Activated T-helper 1 cell treated with anti-CD3 and anti-CD28 coated beads, Interleukin-12 subunit alpha, Interleukin-12 subunit beta, Interleukin-2, Interleukin-4 antibody, amounts not matched to agents 30 ng/mL and 10 ng/mL and 1 ng/mL, durations not matched to agents 14 hours and 24 hours and 36 hours (primary cell): ENCODE measurements at regions of chr6 and their contacts with region 1.

Region 1: DNA sequence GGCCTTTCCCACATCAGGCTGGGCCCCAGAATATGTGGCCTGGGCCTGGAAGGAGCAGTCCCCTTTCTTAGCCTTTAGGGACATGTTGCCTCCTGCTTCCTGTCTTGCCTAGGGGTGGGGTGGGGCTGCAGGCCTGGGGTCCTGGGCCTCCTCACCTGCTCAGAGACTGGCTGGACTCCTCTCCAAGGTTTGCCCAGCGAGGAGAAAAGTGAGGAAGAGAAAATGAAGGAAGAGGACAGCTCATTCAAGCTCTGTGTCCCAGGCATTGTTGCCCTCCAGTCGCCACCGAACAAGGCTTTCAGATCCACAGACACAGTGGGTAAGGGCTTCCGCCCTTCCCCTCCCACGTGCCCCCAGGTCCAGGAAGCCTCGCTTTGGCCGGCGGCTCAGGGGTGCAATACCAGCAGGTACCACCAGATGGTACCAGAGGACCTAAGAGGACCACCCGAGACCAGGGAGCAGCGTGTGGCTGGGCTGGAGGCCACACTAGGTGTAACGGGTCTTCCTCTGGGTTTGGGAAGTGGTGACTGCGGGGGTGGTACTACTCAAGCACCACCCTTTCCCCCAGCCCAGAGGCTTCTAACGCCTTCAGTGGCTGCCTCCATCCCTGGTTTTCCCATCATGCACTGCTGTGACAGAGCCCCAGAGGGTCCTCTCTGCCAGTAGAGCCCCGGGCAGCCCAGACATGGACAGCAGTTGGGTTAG is 5.5 kb upstream of the BAK1 start:
- DNase-seq: peak; percentile 85
- H3K4me3 Mint-ChIP-seq: peak overlapping the region; percentile 79
- H3K27ac Mint-ChIP-seq: peak overlapping the region; percentile 94
- H3K4me1 Mint-ChIP-seq: peaks cover 22% of the 10 kb centered on the region
- H3K27me3 Mint-ChIP-seq: no peaks in the 10 kb centered on the region

Region 2: DNA sequence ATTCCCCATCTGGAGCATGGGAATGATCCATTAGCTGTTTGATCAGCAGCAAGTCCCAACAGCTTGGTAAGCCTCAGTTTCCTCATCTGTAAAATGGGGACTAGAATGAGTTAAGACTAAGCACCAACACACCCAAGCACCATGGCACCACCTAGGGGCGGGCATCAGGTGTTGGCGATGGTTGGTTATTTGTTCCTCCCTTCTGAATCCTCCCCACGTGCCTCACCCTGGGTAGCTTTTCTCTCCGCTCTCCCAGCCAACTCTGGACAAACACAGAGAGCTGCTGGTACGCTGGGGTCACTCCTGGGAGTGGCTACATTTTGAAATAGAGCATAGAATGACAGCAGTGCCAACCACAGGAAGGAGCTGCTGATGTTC is 22.2 kb after region 1 on chr6:
- intact Hi-C with region 1: loop called (anchors 1 kb)
- DNase-seq: no peak
- H3K4me3 Mint-ChIP-seq: no peak overlapping the region
- H3K27ac Mint-ChIP-seq: no peak overlapping the region
- H3K4me1 Mint-ChIP-seq: no peaks in the 10 kb centered on the region
- H3K27me3 Mint-ChIP-seq: peaks cover 4% of the 10 kb centered on the region

Region 3: GRCh38 chr6:33633462-33634158 is 48.1 kb after region 1 on chr6:
- intact Hi-C with region 1: loop called (anchors 1 kb)
- DNase-seq: peak; percentile 61
- H3K4me3 Mint-ChIP-seq: peak overlapping the region; percentile 82
- H3K27ac Mint-ChIP-seq: peak overlapping the region; percentile 90
- H3K4me1 Mint-ChIP-seq: peaks cover 65% of the 10 kb centered on the region
- H3K27me3 Mint-ChIP-seq: no peaks in the 10 kb centered on the region

Region 4: DNA sequence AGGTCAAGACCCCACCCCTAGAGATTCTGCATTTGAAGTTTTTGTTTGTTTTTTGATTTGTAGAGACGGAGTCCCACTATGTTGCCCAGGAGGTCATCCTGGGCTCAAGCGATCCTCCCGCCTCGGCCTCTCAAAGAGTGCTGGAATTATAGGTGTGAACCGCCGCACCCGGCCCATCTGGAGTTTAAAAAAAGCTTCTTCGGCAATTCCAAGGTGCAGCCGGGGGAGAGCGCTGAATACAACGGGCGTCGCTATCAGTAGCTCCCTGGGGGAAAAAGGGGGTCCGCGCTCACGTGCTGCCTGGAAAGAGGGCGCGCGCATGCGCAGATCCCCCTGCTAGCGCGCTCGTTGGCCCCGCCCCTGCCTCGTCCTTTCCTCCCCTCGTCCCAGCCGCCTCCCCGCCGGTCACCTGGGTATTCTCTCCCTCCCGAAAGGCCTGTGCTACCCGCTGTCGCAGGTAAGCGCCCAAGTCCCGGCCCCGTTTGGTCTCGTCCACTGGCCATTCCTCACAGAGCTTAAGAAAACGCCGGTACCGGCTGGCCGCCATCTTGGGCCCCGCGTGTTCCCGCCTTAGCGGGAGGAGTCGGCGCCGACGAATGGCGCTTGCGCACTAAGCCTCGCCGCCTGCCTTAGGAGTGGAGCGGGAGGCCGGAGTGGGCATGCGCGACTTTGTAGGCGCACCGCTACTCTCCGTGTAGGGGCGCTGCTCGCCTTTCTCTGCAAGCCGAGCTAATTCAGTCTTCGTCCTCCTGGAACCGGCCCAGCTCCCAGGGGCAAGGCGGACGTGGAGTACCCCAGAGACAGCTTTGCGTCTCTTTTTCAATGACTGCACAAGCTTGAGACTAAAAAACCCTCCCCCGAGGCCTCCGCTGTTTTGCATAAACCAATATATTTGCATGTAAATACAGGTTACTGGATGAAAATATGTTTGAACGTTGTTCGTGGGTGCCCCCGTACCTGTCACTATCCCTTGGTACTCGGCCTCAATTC is 125.9 kb after region 1 on chr6 and contains the start of gene UQCC2:
- intact Hi-C with region 1: loop called (anchors 1 kb)
- DNase-seq: peak; percentile 96
- H3K4me3 Mint-ChIP-seq: peak within 1 kb of the TSS; percentile 95
- H3K27ac Mint-ChIP-seq: peak within 1 kb of the TSS; percentile 99
- H3K4me1 Mint-ChIP-seq: peaks cover 42% of the 10 kb centered on the region
- H3K27me3 Mint-ChIP-seq: peaks cover 3% of the 10 kb centered on the region
- total RNA-seq, gene UQCC2: 123 and 139 TPM in 2 replicates

Region 5: GRCh38 chr6:33761922-33762629 is 176.5 kb after region 1 on chr6:
- intact Hi-C with region 1: loop called (anchors 5 kb)
- DNase-seq: peak; percentile 31
- H3K4me3 Mint-ChIP-seq: no peak overlapping the region
- H3K27ac Mint-ChIP-seq: no peak overlapping the region
- H3K4me1 Mint-ChIP-seq: no peaks in the 10 kb centered on the region
- H3K27me3 Mint-ChIP-seq: peaks cover 2% of the 10 kb centered on the region